BJ (cell line): ENCODE measurements at regions of chr6 and their contacts with region 1.

Region 1: DNA sequence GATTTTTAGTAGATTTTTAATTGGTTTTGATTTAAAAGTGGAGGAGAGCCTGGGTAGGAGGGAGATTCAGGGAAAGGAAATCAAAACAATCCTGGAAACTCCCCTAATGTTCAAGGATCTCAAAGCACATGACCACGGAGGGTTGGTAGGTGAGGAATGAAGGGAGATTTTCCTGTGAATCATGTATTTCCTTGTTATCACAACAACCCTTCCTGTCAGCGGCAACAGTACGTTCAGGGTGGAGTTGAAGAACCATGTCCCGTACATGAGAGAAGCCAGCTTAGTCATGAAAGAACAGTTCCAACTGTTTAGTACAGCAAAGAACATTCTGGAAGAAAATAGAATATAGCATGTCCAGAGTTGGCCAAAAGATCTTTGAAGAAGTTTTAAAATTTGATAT is 79.4 kb upstream of the SCAF8 start:
- DNase-seq: peak; percentile 50
- H3K4me3 ChIP-seq: no peak overlapping the region
- H3K27me3 ChIP-seq: no peaks in the 10 kb centered on the region
- CTCF ChIP-seq: no peak

Region 2: DNA sequence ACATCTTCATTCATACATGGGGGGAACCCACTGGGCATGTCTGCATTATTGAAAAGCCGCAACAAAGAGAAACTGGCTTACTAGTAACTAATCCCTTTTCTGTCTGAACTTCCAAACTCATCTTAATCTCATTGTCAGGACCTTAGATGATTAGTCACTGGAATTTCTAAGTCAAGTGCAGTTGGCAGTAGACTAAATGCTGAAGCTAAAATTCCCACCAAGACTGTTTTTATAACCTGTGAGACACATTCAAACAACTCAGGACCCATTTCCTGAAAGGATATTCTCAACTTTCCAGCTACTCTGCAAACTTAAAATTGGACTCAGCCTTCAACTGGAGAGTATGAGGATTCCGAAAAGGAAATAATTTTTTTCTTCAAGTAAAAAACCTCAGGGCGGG is 15.5 kb before region 1 on chr6:
- CTCF ChIA-PET with region 1: no interaction called
- POLR2A ChIA-PET with region 1: no interaction called
- DNase-seq: no peak
- H3K4me3 ChIP-seq: no peak overlapping the region
- H3K27me3 ChIP-seq: no peaks in the 10 kb centered on the region
- CTCF ChIP-seq: no peak

Region 3: GRCh38 chr6:154675602-154676088 is 21.8 kb after region 1 on chr6:
- CTCF ChIA-PET with region 1: interaction called, 13 read pairs
- POLR2A ChIA-PET with region 1: no interaction called
- DNase-seq: peak; percentile 90
- H3K4me3 ChIP-seq: no peak overlapping the region
- H3K27me3 ChIP-seq: no peaks in the 10 kb centered on the region
- CTCF ChIP-seq: peak; percentile 99